PC-3 (cell line): ENCODE measurements at regions of chr9 and their contacts with region 1.

Region 1: GRCh38 chr9:22052376-22052945 is 43.4 kb upstream of the CDKN2B start:
- DNase-seq: peak; percentile 98
- ATAC-seq: peak; percentile 84
- H3K4me3 ChIP-seq: peak overlapping the region; percentile 47; the same call in 1 of the 2 replicates
- H3K27ac ChIP-seq: peak overlapping the region; percentile 100
- H3K4me1 ChIP-seq: peaks cover 56% of the 10 kb centered on the region
- H3K27me3 ChIP-seq: no peaks in the 10 kb centered on the region
- CTCF ChIP-seq: no peak

Region 2: GRCh38 chr9:22103650-22104575 is 51.5 kb after region 1 on chr9:
- CTCF ChIA-PET with region 1: no interaction called
- POLR2A ChIA-PET with region 1: no interaction called
- intact Hi-C with region 1: loop called (anchors 5 kb)
- DNase-seq: peak; percentile 57
- ATAC-seq: peak; percentile 29
- H3K4me3 ChIP-seq: no peak overlapping the region
- H3K27ac ChIP-seq: peak overlapping the region; percentile 95
- H3K4me1 ChIP-seq: peaks cover 37% of the 10 kb centered on the region
- H3K27me3 ChIP-seq: no peaks in the 10 kb centered on the region
- CTCF ChIP-seq: no peak

Region 3: DNA sequence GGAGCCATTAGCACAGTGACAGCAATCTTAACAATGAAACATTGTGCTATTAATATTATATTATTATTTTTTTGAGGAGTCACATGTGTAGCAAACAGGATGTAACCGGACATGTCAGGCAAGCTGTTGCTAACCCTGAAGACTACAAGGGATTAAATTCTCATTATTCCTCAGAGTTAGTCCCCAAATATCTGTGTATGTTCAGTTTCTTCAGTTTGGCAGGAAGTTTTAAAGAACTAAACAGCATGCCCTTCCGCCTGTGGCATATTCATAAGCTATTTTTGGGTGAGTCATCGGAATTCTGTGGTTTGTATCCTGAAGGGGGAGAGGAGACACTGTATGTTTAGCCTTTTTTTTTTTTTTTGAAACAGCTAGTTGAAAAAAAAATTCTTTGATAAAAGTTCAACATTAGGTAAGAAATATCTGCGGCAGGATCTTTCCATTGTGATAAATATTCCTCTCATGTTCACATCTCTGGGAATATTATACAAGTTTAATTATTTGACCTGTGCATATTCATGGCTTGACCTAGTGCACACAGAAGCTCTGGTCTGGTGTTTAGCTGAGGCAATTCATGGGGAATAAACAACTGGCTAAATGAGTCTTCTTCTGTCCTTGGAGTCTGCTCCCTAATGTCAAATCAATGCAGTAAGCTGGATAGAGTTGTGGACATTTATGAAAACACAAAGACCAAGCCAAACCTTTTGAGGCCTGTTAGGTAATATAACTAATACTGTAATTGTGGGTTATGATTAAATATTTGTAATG is 159.3 kb after region 1 on chr9:
- CTCF ChIA-PET with region 1: no interaction called
- POLR2A ChIA-PET with region 1: no interaction called
- intact Hi-C with region 1: loop called (anchors 2 kb)
- DNase-seq: peak; percentile 96
- ATAC-seq: peak; percentile 76
- H3K4me3 ChIP-seq: 0 out of 2 replicates have a peak overlapping the region, but pooled peaks have one; percentile 2
- H3K27ac ChIP-seq: peak overlapping the region; percentile 99
- H3K4me1 ChIP-seq: peaks cover 80% of the 10 kb centered on the region
- H3K27me3 ChIP-seq: no peaks in the 10 kb centered on the region
- CTCF ChIP-seq: no peak